ENCODE measurements at regions of chr15 and their contacts with region 1.

Region 1: GRCh38 chr15:73950831-73951561 is 24.7 kb downstream of the LOXL1 start:
- DNase-seq: no peak
- ATAC-seq: peak; percentile 96
- H3K4me3 ChIP-seq: no peak overlapping the region
- H3K27ac ChIP-seq: no peak overlapping the region
- H3K4me1 ChIP-seq: peaks cover 6% of the 10 kb centered on the region; the same call in 1 of the 2 replicates
- H3K27me3 ChIP-seq: no peaks in the 10 kb centered on the region
- CTCF ChIP-seq: peak; percentile 93

Region 2: DNA sequence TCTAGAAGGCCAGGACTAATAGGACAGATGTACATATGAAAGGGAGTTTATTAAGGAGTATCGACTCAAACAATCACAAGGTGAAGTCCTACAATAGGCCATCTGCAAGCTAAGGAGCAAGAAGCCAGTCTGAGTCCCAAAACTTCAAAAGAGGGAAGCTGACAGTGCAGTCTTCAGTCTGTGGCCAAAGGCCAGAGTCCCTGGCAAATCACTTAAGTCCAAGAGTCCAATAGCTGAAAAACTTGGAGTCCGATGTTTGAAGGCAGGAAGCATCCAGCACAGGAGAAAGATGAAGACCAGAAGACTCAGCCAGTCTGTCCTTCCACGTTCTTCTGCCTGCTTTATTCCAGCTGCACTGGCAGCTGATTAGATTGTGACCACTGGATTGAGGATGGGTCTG is 1620.0 kb before region 1 on chr15:
- CTCF ChIA-PET with region 1: no interaction called
- POLR2A ChIA-PET with region 1: no interaction called
- in situ Hi-C with region 1: no loop called
- intact Hi-C with region 1: no loop called
- DNase-seq: no peak
- ATAC-seq: no peak
- H3K4me3 ChIP-seq: no peak overlapping the region
- H3K27ac ChIP-seq: no peak overlapping the region
- H3K4me1 ChIP-seq: no peaks in the 10 kb centered on the region
- H3K27me3 ChIP-seq: no peaks in the 10 kb centered on the region
- CTCF ChIP-seq: no peak

Region 3: GRCh38 chr15:73924171-73924921 is 26.6 kb before region 1 on chr15:
- CTCF ChIA-PET with region 1: no interaction called
- POLR2A ChIA-PET with region 1: no interaction called
- in situ Hi-C with region 1: no loop called
- intact Hi-C with region 1: no loop called
- DNase-seq: no peak
- ATAC-seq: peak; percentile 18
- H3K4me3 ChIP-seq: no peak overlapping the region
- H3K27ac ChIP-seq: peak overlapping the region; percentile 51
- H3K4me1 ChIP-seq: peaks cover 27% of the 10 kb centered on the region
- H3K27me3 ChIP-seq: no peaks in the 10 kb centered on the region
- CTCF ChIP-seq: no peak

Region 4: DNA sequence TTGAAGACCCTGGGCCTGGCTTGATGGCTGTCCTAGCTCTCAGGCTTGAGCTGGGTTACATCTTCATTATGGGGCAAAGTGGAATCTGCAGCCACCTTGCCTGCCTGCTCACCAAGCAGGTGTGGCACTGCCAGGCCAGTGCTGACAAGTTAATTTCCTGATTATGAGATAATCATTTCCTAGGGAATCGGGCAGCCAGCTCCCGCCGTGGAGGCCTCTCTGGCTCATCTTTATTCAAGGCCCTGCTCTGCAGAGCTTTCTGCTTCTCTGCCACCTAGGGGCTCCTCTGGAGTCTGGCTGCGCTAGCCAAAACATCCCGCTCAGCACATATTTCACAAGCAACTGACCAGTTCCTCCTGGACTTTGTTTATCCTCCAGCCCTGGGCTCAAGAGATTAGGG is 14.8 kb before region 1 on chr15:
- CTCF ChIA-PET with region 1: interaction called, 12 read pairs
- POLR2A ChIA-PET with region 1: no interaction called
- in situ Hi-C with region 1: no loop called
- intact Hi-C with region 1: no loop called
- DNase-seq: no peak
- ATAC-seq: no peak
- H3K4me3 ChIP-seq: no peak overlapping the region
- H3K27ac ChIP-seq: no peak overlapping the region
- H3K4me1 ChIP-seq: no peaks in the 10 kb centered on the region
- H3K27me3 ChIP-seq: no peaks in the 10 kb centered on the region
- CTCF ChIP-seq: no peak

Region 5: DNA sequence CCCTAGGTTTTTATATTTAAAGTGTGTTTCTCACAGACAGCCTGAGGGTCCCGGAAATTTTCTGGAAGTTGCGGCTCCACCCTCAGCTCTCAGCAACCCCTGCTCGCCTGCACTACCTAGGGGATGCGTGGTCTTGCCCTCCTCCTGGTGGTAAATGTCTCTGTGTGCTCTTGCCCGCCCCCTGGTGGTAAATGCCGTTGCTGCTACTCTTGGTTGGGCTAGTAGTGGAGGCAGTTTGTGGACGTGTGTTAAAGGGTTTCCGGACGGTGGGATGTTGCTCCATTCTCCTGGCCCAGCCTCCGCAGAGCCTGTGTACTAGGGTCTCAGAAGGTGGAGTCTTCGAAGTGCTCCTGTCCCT is 13.7 kb after region 1 on chr15:
- CTCF ChIA-PET with region 1: interaction called, 13 read pairs
- POLR2A ChIA-PET with region 1: no interaction called
- in situ Hi-C with region 1: no loop called
- intact Hi-C with region 1: no loop called
- DNase-seq: peak; percentile 70
- ATAC-seq: peak; percentile 97
- H3K4me3 ChIP-seq: peak overlapping the region in 1 of 2 experiments; percentile 31; a peak in 1 of 4 replicates
- H3K27ac ChIP-seq: no peak overlapping the region
- H3K4me1 ChIP-seq: no peaks in the 10 kb centered on the region
- H3K27me3 ChIP-seq: no peaks in the 10 kb centered on the region
- CTCF ChIP-seq: peak; percentile 98

Region 6: GRCh38 chr15:75069301-75069925 is 1118.4 kb after region 1 on chr15:
- CTCF ChIA-PET with region 1: no interaction called
- POLR2A ChIA-PET with region 1: no interaction called
- in situ Hi-C with region 1: no loop called
- intact Hi-C with region 1: no loop called
- DNase-seq: no peak
- ATAC-seq: 0 out of 2 replicates have a peak, but pooled peaks have one; percentile 30
- H3K4me3 ChIP-seq: no peak overlapping the region
- H3K27ac ChIP-seq: no peak overlapping the region
- H3K4me1 ChIP-seq: no peaks in the 10 kb centered on the region; the same call in 1 of the 2 replicates
- H3K27me3 ChIP-seq: no peaks in the 10 kb centered on the region
- CTCF ChIP-seq: no peak

Measured in Panc1 (cell line).